ENCODE measurements at regions of chr1 and their contacts with region 1.

Region 1: GRCh38 chr1:16613185-16614147 is at the start of gene NBPF1:
- DNase-seq: peak; percentile 96 to 97
- ATAC-seq: peak; percentile 96 to 98 (median 98)
- H3K4me3 ChIP-seq: peak within 1 kb of the TSS; percentile 75
- H3K27ac ChIP-seq: peak within 1 kb of the TSS; percentile 80
- H3K4me1 ChIP-seq: peaks cover 18% of the 10 kb centered on the region
- H3K27me3 ChIP-seq: no peaks in the 10 kb centered on the region
- CTCF ChIP-seq: no peak
- total RNA-seq, gene NBPF1: 5.3 to 20.9 (median 7.3) TPM

Region 2: GRCh38 chr1:16631248-16632043 is 18.0 kb after region 1 on chr1:
- intact Hi-C with region 1: loop called in 1 of 2 experiments (anchors 2 kb)
- DNase-seq: peak; percentile 18 to 57
- ATAC-seq: no peak
- H3K4me3 ChIP-seq: no peak overlapping the region
- H3K27ac ChIP-seq: no peak overlapping the region
- H3K4me1 ChIP-seq: no peaks in the 10 kb centered on the region
- H3K27me3 ChIP-seq: no peaks in the 10 kb centered on the region
- CTCF ChIP-seq: no peak

Measured in psoas muscle (tissue), 8 donors.